ENCODE measurements at regions of chr6 and their contacts with region 1.

Region 1: GRCh38 chr6:27132532-27133280 is 114.8 kb upstream of the PRSS16 start:
- DNase-seq: peak; percentile 99
- H3K4me3 ChIP-seq: peak overlapping the region; percentile 64 to 69 (median 68)
- H3K27ac ChIP-seq: peak overlapping the region; percentile 97
- H3K4me1 ChIP-seq: peaks cover 13% of the 10 kb centered on the region
- H3K27me3 ChIP-seq: no peaks in the 10 kb centered on the region
- CTCF ChIP-seq: no peak

Region 2: GRCh38 chr6:26025894-26026832 is 1106.5 kb before region 1 on chr6:
- CTCF ChIA-PET with region 1: no interaction called
- dilution Hi-C with region 1: no loop called
- in situ Hi-C with region 1: loop called in 1 of 2 experiments (anchors 25 kb)
- intact Hi-C with region 1: no loop called
- DNase-seq: peak; percentile 92
- H3K4me3 ChIP-seq: peak overlapping the region; percentile 41 to 60 (median 59)
- H3K27ac ChIP-seq: peak overlapping the region; percentile 89
- H3K4me1 ChIP-seq: peaks cover 30% of the 10 kb centered on the region
- H3K27me3 ChIP-seq: no peaks in the 10 kb centered on the region
- CTCF ChIP-seq: peak; percentile 91 to 95

Region 3: GRCh38 chr6:26156076-26156849 is 976.4 kb before region 1 on chr6:
- CTCF ChIA-PET with region 1: no interaction called
- dilution Hi-C with region 1: no loop called
- in situ Hi-C with region 1: loop called in 1 of 2 experiments (anchors 25 kb)
- intact Hi-C with region 1: loop called (anchors 2 kb)
- DNase-seq: peak; percentile 94
- H3K4me3 ChIP-seq: peak overlapping the region; percentile 62 to 80 (median 74)
- H3K27ac ChIP-seq: peak overlapping the region; percentile 88
- H3K4me1 ChIP-seq: peaks cover 31% of the 10 kb centered on the region
- H3K27me3 ChIP-seq: no peaks in the 10 kb centered on the region
- CTCF ChIP-seq: peak in 1 of 2 donors; percentile 12

Region 4: DNA sequence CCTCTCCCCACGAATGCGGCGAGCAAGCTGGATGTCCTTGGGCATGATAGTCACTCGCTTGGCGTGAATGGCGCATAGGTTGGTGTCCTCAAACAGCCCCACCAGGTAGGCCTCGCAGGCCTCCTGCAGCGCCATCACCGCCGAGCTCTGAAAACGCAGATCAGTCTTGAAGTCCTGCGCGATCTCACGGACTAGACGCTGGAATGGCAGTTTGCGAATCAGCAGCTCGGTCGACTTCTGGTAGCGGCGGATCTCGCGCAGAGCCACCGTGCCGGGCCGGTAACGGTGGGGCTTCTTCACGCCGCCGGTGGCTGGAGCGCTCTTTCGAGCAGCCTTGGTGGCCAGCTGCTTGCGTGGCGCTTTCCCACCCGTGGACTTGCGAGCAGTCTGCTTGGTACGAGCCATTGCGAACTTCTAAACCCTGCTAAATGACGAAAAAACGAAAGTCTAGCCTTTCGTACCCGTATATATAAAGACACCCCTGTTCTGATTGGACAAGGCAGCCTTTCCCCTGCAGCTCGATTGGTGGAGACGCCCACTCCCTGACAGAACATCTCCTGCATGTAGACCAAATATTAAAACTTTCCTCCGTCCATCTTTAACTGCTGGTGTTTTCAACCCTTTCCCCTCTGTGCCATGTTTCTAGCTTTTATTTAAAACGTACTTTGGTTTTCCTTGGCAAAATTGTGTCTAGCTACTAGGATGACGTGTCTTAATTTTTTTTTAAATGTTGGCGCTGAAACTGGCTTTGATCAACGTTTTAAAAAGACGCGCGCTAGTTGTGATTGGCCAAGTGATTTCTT is 935.7 kb before region 1 on chr6:
- CTCF ChIA-PET with region 1: no interaction called
- dilution Hi-C with region 1: loop called (anchors 25 kb)
- in situ Hi-C with region 1: loop called in 1 of 2 experiments (anchors 25 kb)
- intact Hi-C with region 1: loop called (anchors 2 kb)
- DNase-seq: peak; percentile 89
- H3K4me3 ChIP-seq: peak overlapping the region; percentile 69 to 90 (median 87)
- H3K27ac ChIP-seq: peak overlapping the region; percentile 87
- H3K4me1 ChIP-seq: peaks cover 8% of the 10 kb centered on the region
- H3K27me3 ChIP-seq: no peaks in the 10 kb centered on the region
- CTCF ChIP-seq: no peak

Region 5: DNA sequence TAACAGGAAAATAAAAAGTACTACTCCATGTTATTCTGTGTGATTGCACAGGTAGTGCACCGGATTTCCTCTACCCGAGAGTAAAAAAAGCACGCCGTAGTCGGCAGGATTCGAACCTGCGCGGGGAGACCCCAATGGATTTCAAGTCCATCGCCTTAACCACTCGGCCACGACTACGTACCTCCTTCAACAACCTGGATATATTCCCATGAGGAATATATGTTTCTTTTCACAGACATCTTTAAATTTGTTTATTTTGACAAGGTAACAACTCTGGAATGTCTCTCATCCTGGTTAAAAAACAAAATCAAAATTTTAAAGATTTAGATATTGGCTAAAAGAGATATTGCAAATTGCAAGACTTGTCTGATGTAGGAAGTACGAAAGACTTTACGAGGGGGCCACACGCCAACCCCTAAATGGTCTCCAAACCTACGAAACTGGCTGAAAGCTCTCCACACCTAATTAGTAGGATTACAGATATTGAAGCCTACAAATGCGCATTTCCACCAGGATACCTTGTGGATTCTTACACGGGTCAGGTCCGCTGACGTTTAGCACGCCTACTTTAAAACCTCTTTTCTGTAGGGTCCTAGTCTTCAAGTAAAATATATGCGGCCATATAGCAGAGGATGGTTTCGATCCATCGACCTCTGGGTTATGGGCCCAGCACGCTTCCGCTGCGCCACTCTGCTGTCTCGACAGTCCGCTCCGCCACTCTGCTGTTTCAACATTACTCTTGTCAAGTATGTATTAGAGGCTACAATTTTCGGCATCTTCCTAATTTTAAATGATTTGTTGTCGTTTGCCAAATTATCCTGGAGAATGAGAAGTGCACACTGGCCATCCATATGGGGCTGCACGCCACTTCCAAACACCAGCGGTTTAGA is 820.0 kb before region 1 on chr6:
- CTCF ChIA-PET with region 1: no interaction called
- dilution Hi-C with region 1: no loop called
- in situ Hi-C with region 1: no loop called
- intact Hi-C with region 1: loop called (anchors 5 kb)
- DNase-seq: peak; percentile 81
- H3K4me3 ChIP-seq: peak overlapping the region; percentile 60 to 89 (median 70)
- H3K27ac ChIP-seq: peak overlapping the region; percentile 58
- H3K4me1 ChIP-seq: peaks cover 28% of the 10 kb centered on the region
- H3K27me3 ChIP-seq: no peaks in the 10 kb centered on the region
- CTCF ChIP-seq: no peak

Region 6: GRCh38 chr6:26596579-26597388 is 535.9 kb before region 1 on chr6 and contains the start of gene ABT1:
- CTCF ChIA-PET with region 1: no interaction called
- dilution Hi-C with region 1: no loop called
- in situ Hi-C with region 1: no loop called
- intact Hi-C with region 1: loop called (anchors 2 kb)
- DNase-seq: peak; percentile 98
- H3K4me3 ChIP-seq: peak within 1 kb of the TSS; percentile 61 to 99 (median 89)
- H3K27ac ChIP-seq: peak within 1 kb of the TSS; percentile 68
- H3K4me1 ChIP-seq: peaks cover 19% of the 10 kb centered on the region
- H3K27me3 ChIP-seq: no peaks in the 10 kb centered on the region
- CTCF ChIP-seq: no peak
- total RNA-seq, gene ABT1: 14.2 to 15.9 TPM

Region 7: DNA sequence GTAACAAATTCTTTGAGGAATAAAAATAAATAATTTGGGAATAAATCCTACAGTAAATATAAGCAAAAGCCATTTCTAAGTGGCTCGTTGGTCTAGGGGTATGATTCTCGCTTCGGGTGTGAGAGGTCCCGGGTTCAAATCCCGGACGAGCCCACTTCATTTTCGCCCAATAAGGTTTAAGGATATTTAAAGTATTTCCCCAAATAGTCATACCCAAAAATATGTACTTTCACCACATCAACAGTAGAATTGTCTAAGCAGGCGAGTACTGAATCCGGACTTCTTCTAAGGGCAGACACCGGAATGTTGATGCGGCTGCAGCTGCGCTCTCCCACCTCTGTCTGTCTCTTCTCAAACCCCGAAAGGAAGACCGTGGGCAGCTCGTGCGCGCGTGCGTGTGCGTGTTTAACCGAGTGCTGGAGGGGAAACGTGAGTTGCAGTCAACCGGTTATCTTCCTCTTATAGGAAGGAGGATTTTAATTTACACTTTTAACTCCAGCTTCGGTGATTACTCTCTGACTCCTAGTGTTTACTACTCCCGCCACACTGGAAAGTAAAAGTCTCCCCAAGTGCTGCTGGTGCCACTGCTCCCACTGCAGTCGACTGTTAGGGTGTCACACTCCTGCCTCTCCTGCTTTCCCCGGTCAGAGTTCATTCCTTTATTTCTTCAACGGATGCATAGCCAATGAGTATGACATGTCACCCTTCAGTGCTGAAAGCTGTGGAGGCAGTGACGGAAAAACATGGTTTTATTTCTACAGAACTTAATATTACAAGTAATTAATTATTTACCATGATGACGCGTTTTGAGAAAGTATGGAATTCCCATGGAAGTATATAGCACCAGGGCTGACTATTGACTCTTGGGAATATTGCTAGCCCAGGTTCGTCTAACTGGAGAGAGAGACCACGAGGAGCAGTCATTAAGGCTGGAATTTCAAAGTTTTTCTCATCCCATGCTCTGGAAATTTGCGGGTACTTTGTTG is 40.8 kb before region 1 on chr6:
- CTCF ChIA-PET with region 1: no interaction called
- dilution Hi-C with region 1: no loop called
- in situ Hi-C with region 1: no loop called
- intact Hi-C with region 1: no loop called
- DNase-seq: peak; percentile 88
- H3K4me3 ChIP-seq: peak overlapping the region; percentile 39 to 58 (median 53)
- H3K27ac ChIP-seq: peak overlapping the region; percentile 23
- H3K4me1 ChIP-seq: peaks cover 17% of the 10 kb centered on the region
- H3K27me3 ChIP-seq: no peaks in the 10 kb centered on the region
- CTCF ChIP-seq: no peak

Region 8: DNA sequence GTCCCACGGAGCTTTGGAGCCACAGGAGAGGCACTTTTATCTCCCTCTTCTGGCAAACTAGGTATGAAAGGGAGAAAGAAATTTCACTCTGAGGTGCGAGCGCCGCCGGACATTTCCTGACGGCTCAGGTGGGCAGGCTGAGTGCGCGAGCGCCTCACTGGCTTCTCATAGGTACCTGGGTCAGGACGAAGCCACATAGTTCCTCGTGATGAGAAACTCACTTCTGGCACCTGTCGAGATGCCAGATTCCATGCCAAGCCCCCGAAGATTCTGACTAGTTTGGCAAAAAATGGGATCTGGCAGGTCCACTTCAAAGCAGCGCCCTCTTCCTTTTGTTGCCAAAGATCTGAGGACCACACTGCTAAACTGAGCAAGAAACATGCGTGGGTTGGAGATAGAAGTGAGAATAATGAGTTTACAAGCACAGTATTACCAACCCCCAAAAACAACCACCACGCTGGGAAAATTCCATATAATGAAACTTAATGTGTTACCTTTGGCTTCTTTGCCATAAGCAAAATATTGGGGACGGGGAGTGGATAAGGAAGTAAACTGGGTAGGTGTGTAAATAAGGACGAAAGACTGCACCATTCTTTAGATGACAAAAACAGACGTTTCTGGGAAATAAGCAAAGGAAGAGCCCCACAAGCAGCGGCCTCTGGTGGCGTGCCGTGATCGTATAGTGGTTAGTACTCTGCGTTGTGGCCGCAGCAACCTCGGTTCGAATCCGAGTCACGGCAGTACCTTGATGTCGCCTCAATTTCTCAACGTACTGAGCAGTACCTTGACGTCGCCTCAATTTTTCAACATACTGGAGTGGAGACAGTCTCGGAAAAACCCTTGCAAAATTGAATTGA is 25.0 kb after region 1 on chr6:
- CTCF ChIA-PET with region 1: no interaction called
- dilution Hi-C with region 1: no loop called
- in situ Hi-C with region 1: no loop called
- intact Hi-C with region 1: loop called (anchors 1 kb)
- DNase-seq: peak; percentile 86
- H3K4me3 ChIP-seq: peak overlapping the region; percentile 48 to 82 (median 60)
- H3K27ac ChIP-seq: no peak overlapping the region
- H3K4me1 ChIP-seq: peaks cover 6% of the 10 kb centered on the region
- H3K27me3 ChIP-seq: no peaks in the 10 kb centered on the region
- CTCF ChIP-seq: peak; percentile 16 to 55

Measured in mammary epithelial cell (primary cell).